HCT116 (cell line): ENCODE measurements at regions of chr10 and their contacts with region 1.

Region 1: GRCh38 chr10:119608316-119609155 is 11.8 kb upstream of the TIAL1 start:
- DNase-seq: peak; percentile 54
- ATAC-seq: peak; percentile 100
- H3K4me3 ChIP-seq: no peak overlapping the region
- H3K27ac ChIP-seq: no peak overlapping the region
- H3K4me1 ChIP-seq: peaks cover 0 to 10% of the 10 kb centered on the region in 2 experiments; a peak in 1 of 4 replicates
- H3K27me3 ChIP-seq: no peaks in the 10 kb centered on the region
- CTCF ChIP-seq: peak; percentile 92 to 97 (median 92)
- POLR2A ChIP-seq: no peak
- RAD21 ChIP-seq: peak; percentile 99

Region 2: DNA sequence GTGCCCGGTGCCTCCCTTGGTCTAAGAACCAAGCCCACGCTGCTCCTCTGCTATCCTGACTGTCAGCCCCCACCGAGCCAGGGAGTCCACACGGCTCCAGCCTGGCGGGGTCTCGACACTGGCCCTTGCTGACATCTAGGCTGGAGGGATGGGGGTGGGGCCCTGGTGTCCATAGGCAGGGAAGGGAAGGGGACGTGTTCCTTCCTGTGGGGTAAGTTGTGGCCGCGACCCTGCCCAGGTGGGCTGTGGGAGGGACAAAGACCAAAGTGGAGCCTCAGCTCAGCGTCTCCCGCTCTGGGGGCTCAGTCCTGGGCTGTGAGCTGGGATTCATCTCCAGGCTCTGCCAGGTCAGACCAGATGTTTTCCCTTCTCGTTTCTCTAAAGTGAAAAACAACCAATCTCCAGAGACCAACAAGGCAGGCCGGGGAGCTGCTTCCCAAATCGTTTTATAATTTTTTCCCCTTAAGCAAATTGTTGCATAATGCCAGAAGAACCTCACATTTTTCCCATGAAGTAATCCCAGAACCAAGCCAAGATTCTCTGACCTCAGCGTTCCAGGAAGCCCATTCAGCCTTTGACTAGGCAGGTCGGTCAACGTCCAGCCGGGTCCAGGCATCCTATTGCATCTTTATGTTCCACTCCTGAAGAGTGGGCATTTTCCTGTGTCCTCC is 167.2 kb before region 1 on chr10:
- CTCF ChIA-PET with region 1: no interaction called
- POLR2A ChIA-PET with region 1: no interaction called
- RAD21 ChIA-PET with region 1: no interaction called
- intact Hi-C with region 1: no loop called
- DNase-seq: no peak
- ATAC-seq: no peak
- H3K4me3 ChIP-seq: no peak overlapping the region
- H3K27ac ChIP-seq: no peak overlapping the region
- H3K4me1 ChIP-seq: 0 out of 4 replicates have a peak, but pooled peaks cover 0 to 3% of the 10 kb centered on the region in 2 experiments
- H3K27me3 ChIP-seq: no peaks in the 10 kb centered on the region
- CTCF ChIP-seq: no peak
- POLR2A ChIP-seq: no peak
- RAD21 ChIP-seq: no peak

Region 3: GRCh38 chr10:119667562-119668328 is 59.2 kb after region 1 on chr10:
- CTCF ChIA-PET with region 1: interaction called, 4 read pairs
- POLR2A ChIA-PET with region 1: no interaction called
- RAD21 ChIA-PET with region 1: interaction called in 1 of 2 experiments, 3 read pairs
- intact Hi-C with region 1: loop called (anchors 1 kb)
- DNase-seq: peak; percentile 87
- ATAC-seq: peak; percentile 93
- H3K4me3 ChIP-seq: peak overlapping the region in 1 of 2 experiments; percentile 43; a peak in 2 of 4 replicates
- H3K27ac ChIP-seq: peak overlapping the region; percentile 74
- H3K4me1 ChIP-seq: peaks cover 39 to 61% of the 10 kb centered on the region in 2 experiments
- H3K27me3 ChIP-seq: no peaks in the 10 kb centered on the region
- CTCF ChIP-seq: no peak; a peak in 1 of 6 replicates
- POLR2A ChIP-seq: no peak
- RAD21 ChIP-seq: peak; percentile 48

Region 4: GRCh38 chr10:119680050-119680449 is 71.5 kb after region 1 on chr10:
- CTCF ChIA-PET with region 1: interaction called, 14 read pairs
- POLR2A ChIA-PET with region 1: no interaction called
- RAD21 ChIA-PET with region 1: interaction called in 1 of 2 experiments, 3 read pairs
- intact Hi-C with region 1: no loop called
- DNase-seq: peak; percentile 33
- ATAC-seq: peak; percentile 47
- H3K4me3 ChIP-seq: peak overlapping the region in 1 of 2 experiments; percentile 23; a peak in 2 of 4 replicates
- H3K27ac ChIP-seq: 0 out of 2 replicates have a peak overlapping the region, but pooled peaks have one; percentile 1
- H3K4me1 ChIP-seq: peaks cover 41 to 55% of the 10 kb centered on the region in 2 experiments
- H3K27me3 ChIP-seq: no peaks in the 10 kb centered on the region
- CTCF ChIP-seq: no peak
- POLR2A ChIP-seq: no peak
- RAD21 ChIP-seq: no peak

Region 5: GRCh38 chr10:119725828-119726675 is 117.5 kb after region 1 on chr10 and contains the start of gene INPP5F:
- CTCF ChIA-PET with region 1: interaction called, 10 read pairs
- POLR2A ChIA-PET with region 1: no interaction called
- RAD21 ChIA-PET with region 1: interaction called in 1 of 2 experiments, 3 read pairs
- intact Hi-C with region 1: no loop called
- DNase-seq: peak; percentile 97
- ATAC-seq: peak; percentile 96
- H3K4me3 ChIP-seq: peak within 1 kb of the TSS; percentile 71 to 76
- H3K27ac ChIP-seq: peak within 1 kb of the TSS; percentile 66
- H3K4me1 ChIP-seq: peaks cover 15 to 23% of the 10 kb centered on the region in 2 experiments
- H3K27me3 ChIP-seq: no peaks in the 10 kb centered on the region
- CTCF ChIP-seq: peak in 2 of 3 experiments; percentile 14 to 15; a peak in 1 of 6 replicates
- POLR2A ChIP-seq: no peak
- RAD21 ChIP-seq: no peak
- total RNA-seq, gene INPP5F: 21.6 TPM

Region 6: GRCh38 chr10:119859420-119860258 is 251.1 kb after region 1 on chr10:
- CTCF ChIA-PET with region 1: interaction called, 51 read pairs
- POLR2A ChIA-PET with region 1: no interaction called
- RAD21 ChIA-PET with region 1: interaction called in 1 of 2 experiments, 3 read pairs
- intact Hi-C with region 1: loop called (anchors 1 kb)
- DNase-seq: peak; percentile 59
- ATAC-seq: peak; percentile 69
- H3K4me3 ChIP-seq: no peak overlapping the region
- H3K27ac ChIP-seq: no peak overlapping the region
- H3K4me1 ChIP-seq: no peaks in the 10 kb centered on the region
- H3K27me3 ChIP-seq: no peaks in the 10 kb centered on the region
- CTCF ChIP-seq: peak; percentile 60 to 93 (median 91)
- POLR2A ChIP-seq: no peak
- RAD21 ChIP-seq: peak; percentile 93

Region 7: GRCh38 chr10:120336911-120337540 is 728.5 kb after region 1 on chr10:
- CTCF ChIA-PET with region 1: no interaction called
- POLR2A ChIA-PET with region 1: no interaction called
- RAD21 ChIA-PET with region 1: no interaction called
- intact Hi-C with region 1: loop called (anchors 5 kb)
- DNase-seq: peak; percentile 51
- ATAC-seq: peak; percentile 80
- H3K4me3 ChIP-seq: no peak overlapping the region
- H3K27ac ChIP-seq: no peak overlapping the region
- H3K4me1 ChIP-seq: no peaks in the 10 kb centered on the region
- H3K27me3 ChIP-seq: peaks cover 32% of the 10 kb centered on the region
- CTCF ChIP-seq: peak; percentile 75 to 96 (median 95)
- POLR2A ChIP-seq: no peak
- RAD21 ChIP-seq: peak; percentile 70